ENCODE measurements at regions of chr9 and their contacts with region 1.

Region 1: GRCh38 chr9:70080481-70081119 is 37.0 kb downstream of the MAMDC2 start:
- DNase-seq: no peak
- H3K4me3 ChIP-seq: no peak overlapping the region
- H3K27ac ChIP-seq: no peak overlapping the region
- H3K27me3 ChIP-seq: no peaks in the 10 kb centered on the region
- CTCF ChIP-seq: no peak

Region 2: GRCh38 chr9:69019808-69020207 is 1060.8 kb before region 1 on chr9:
- intact Hi-C with region 1: loop called in 1 of 2 experiments (anchors 10 kb)
- DNase-seq: no peak
- H3K4me3 ChIP-seq: no peak overlapping the region
- H3K27ac ChIP-seq: no peak overlapping the region
- H3K27me3 ChIP-seq: no peaks in the 10 kb centered on the region
- CTCF ChIP-seq: no peak

Region 3: DNA sequence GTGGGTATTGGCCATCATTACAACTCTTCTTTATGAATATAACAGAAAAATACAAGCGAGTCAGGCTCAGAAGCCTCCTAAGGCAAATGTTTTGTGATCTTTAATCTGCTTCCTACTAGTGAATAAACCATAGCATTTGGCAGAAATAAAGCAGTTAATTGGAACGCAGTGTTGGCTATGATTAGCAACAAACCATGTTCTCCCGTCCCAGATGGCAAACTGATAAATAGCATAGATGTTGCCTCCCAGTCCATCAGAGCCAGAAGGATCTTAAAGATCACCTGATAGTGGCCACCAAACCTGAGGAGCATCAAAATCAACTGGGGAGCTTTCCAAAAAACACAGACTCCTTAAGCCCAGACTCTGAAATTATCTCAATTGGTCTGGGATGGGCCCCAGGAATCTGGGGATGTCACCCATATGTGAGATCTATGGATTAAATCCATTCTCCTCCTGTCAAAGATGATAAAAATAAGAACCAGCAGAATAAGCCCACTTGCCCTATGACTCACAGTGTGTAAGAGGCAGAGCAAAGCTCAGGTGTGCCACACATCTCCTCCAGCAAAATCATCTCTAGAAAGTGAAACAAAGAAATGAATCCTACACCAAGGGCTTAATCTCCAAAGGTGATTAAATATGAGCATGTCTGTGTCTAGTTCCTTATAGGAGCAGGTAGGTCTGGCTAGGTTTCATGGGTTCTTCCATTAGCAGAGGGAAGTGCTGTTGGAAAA is 458.7 kb before region 1 on chr9:
- intact Hi-C with region 1: no loop called
- DNase-seq: no peak
- H3K4me3 ChIP-seq: no peak overlapping the region
- H3K27ac ChIP-seq: peak overlapping the region in 2 of 59 donors; percentile 11 to 23
- H3K27me3 ChIP-seq: no peaks in the 10 kb centered on the region
- CTCF ChIP-seq: no peak

Region 4: DNA sequence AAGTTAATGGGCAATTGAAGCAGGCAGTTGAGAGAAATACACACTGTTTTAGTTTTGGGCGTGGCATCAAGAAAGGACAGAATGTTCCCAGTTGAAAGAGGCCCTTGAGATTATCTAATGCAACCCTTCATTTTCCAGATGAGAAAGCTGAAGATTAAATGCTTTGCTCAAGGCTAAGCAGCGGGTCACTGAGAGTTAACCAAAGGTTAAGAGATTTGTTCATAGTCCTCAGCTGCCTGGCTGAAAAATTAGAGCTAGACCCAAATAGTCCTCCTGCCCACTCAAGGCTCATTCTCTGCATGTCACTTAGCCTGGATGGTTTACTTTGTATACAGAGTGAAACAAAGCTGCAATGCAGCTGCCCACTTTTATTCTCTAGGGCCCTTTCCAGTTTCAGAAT is 83.6 kb before region 1 on chr9:
- intact Hi-C with region 1: no loop called
- DNase-seq: no peak
- H3K4me3 ChIP-seq: no peak overlapping the region
- H3K27ac ChIP-seq: peak overlapping the region in 8 of 59 donors; percentile 9 to 66 (median 23)
- H3K27me3 ChIP-seq: peaks cover 0 to 4% (median 0%) of the 10 kb centered on the region in 45 donors
- CTCF ChIP-seq: no peak

Region 5: DNA sequence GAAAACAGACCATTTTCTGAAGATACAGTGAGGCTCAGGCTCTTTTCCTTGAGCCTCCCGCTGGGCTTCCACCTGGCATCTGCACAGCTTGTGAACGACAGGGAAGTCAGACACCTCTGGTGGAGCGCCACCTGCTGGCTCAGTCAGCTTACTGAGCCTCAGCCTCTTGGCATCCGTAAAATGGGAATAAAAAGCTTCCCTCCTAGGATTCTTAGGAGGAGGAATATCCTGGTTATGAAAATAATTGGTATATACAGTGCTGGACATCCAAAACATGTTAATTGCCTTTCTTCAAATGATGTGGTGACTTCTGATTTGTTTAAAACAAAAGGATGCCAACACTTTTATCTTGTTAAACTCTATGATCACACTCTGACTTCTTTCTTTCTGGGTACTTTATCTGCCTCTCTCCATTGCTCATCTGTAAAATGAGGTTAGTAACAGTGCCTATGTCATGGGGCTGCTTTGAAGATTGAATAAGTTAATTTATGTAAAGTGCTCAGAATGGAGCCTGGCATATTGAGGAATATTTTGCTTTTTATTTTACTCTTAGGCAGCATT is 30.5 kb after region 1 on chr9:
- intact Hi-C with region 1: no loop called
- DNase-seq: peak; percentile 49 to 76 (median 68)
- H3K4me3 ChIP-seq: no peak overlapping the region
- H3K27ac ChIP-seq: no peak overlapping the region
- H3K27me3 ChIP-seq: no peaks in the 10 kb centered on the region
- CTCF ChIP-seq: peak; percentile 60 to 90 (median 79)

Region 6: DNA sequence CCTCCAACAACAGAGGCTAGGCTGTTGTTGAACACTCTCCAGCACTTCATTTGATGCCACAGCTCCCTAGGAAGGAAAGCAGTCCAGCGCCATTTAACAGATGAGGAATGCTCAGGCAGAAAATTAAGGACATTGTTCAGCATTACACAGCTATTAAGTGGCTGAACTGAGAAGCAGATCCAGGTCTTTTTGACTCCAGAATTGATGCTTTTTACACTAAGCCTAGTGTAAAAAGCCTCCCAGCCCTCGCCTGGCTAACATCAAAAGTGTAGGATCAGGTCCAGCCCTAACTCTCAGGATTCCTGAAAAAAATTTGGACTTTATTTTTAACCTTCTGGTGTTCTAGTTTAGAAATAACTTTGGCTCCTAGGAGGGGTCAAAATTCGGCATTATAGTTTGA is 71.8 kb after region 1 on chr9:
- intact Hi-C with region 1: loop called in 1 of 2 experiments (anchors 2 kb)
- DNase-seq: no peak
- H3K4me3 ChIP-seq: no peak overlapping the region
- H3K27ac ChIP-seq: no peak overlapping the region
- H3K27me3 ChIP-seq: no peaks in the 10 kb centered on the region
- CTCF ChIP-seq: no peak

Region 7: DNA sequence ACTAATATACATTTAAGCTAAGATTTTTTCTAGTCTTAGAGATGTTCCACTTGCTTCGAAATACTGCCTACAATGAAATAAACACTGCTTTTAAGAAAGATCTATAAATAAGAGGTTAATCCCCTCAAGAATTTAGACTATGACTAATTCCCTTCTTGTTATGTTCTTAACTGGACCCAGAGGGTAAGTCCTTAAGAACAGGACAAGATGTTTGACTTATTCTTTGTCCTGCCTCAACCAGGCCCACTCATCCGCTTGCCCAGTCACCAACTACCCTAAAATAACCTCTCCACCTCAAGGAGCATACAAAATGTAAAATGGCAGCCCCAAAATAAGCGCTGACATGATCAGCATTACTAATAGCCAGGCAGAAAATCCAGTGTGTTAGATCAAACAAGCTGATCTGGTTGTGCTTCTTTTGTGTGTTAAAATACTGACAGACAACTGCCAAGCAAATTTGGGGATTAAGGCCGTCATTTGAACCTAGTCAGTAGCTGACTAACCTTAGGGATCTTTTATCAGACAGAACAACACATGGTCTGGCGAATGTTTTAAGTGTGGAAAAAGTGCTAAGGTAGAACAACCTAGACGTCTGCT is 84.5 kb after region 1 on chr9:
- intact Hi-C with region 1: no loop called
- DNase-seq: no peak
- H3K4me3 ChIP-seq: no peak overlapping the region
- H3K27ac ChIP-seq: no peak overlapping the region
- H3K27me3 ChIP-seq: no peaks in the 10 kb centered on the region
- CTCF ChIP-seq: no peak

Measured in dorsolateral prefrontal cortex (tissue), 120 donors.